ENCODE measurements at regions of chr16 and their contacts with region 1.

Region 1: DNA sequence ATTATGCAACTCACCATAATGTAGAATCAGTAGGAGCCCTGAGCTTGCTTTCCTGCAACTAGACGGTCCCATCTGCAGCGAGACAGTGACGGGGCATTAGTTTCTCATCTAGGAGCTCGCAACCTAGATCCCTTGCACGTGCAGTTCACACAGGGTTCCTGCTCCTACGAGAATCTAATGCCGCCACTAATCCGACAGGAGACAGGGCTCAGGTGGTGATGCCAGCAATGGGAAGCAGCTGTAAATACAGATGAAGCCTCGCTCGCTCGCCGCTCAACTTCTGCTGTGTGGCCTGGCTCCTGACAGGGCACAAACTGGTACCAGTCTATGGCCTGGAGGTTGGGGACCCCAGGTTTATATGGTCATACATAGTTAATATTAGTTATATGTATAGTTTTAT is 394.5 kb downstream of the NPIPA8 start:
- DNase-seq: no peak

Region 2: DNA sequence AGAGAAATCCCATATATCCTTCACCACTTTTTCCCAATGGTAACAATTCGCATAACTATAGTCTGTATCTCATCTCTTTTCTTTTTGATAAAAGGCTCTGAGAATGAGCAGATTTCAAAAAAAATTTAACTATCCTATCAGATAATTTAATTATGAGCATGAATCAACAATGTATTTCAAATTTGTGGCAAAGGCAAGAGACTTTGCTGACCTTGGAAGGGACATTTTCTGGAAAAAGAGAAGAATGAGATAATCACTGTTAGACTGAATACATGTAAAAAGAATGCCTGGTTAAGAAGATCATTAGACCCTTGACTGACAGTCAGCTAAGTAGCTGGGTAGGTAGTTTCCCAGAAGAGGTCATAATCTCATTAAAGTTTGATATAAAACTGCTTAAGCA is 42.9 kb before region 1 on chr16:
- intact Hi-C with region 1: loop called in 1 of 2 experiments (anchors 2 kb)
- DNase-seq: no peak

Measured in posterior vena cava (tissue), 2 donors.